ENCODE measurements at regions of chr6 and their contacts with region 1.

Region 1: DNA sequence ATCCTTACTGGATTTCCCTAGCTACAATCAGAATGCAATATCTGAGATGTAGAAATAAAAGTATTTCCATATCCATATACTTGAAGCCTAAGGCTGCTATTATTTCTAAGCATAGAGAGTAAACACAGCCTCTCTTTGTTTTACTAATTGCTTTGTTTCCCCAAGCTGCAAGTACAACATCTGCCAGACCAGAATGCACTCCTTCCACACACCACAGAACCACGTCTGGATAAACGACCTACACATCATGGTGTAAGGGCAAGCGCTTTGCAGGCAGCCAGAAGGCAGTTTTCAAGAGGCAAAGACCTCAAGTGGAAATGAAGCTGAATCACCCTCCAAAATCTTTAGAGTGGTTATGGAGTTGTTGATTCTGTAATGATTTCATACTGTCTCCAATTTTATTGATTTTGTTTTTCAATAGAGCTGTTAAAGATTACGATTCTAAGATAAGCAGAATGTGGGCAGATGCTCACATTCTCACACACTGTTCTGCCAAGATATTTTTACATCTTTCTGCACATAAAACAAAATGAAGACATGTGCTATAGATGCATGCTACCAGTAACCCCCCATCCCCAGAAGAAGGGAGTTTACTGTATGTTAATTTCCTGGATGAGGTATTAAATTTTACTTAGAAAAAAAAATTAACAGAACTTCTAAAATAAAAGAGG is 88.8 kb downstream of the THEMIS start:
- DNase-seq: peak; percentile 38
- ATAC-seq: no peak
- H3K4me3 Mint-ChIP-seq: peak overlapping the region; percentile 36
- H3K27ac Mint-ChIP-seq: peak overlapping the region; percentile 71
- H3K4me1 Mint-ChIP-seq: peaks cover 88% of the 10 kb centered on the region
- H3K27me3 Mint-ChIP-seq: no peaks in the 10 kb centered on the region

Region 2: GRCh38 chr6:127085181-127085580 is 726.9 kb before region 1 on chr6:
- CTCF ChIA-PET with region 1: no interaction called
- POLR2A ChIA-PET with region 1: no interaction called
- intact Hi-C with region 1: no loop called
- DNase-seq: no peak
- ATAC-seq: no peak
- H3K4me3 Mint-ChIP-seq: no peak overlapping the region
- H3K27ac Mint-ChIP-seq: no peak overlapping the region
- H3K4me1 Mint-ChIP-seq: no peaks in the 10 kb centered on the region
- H3K27me3 Mint-ChIP-seq: peaks cover 3% of the 10 kb centered on the region

Region 3: GRCh38 chr6:127725821-127726220 is 86.2 kb before region 1 on chr6:
- CTCF ChIA-PET with region 1: no interaction called
- POLR2A ChIA-PET with region 1: no interaction called
- intact Hi-C with region 1: no loop called
- DNase-seq: no peak
- ATAC-seq: no peak
- H3K4me3 Mint-ChIP-seq: no peak overlapping the region
- H3K27ac Mint-ChIP-seq: no peak overlapping the region
- H3K4me1 Mint-ChIP-seq: peaks cover 33% of the 10 kb centered on the region
- H3K27me3 Mint-ChIP-seq: no peaks in the 10 kb centered on the region

Region 4: DNA sequence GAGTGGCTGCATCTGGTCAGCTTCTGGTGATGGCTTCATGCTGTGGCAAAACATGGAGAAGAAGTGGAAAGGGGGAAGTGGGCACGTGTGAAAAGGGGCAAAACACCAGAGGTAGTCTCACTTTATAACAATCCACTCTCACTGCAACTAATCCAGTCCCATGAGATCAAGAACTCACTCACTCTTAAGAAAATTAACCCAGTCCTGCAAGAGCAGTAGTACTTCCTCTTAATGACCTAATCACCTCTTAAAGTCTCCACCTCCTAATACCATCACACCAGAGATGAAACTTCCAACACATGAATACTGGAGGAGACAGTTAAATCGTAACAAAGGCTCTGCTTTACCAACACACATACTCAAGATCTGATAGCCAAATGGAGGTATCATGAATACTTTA is 63.7 kb before region 1 on chr6:
- CTCF ChIA-PET with region 1: interaction called, 3 read pairs
- POLR2A ChIA-PET with region 1: no interaction called
- intact Hi-C with region 1: loop called (anchors 2 kb)
- DNase-seq: no peak
- ATAC-seq: peak; percentile 76
- H3K4me3 Mint-ChIP-seq: peak overlapping the region; percentile 23
- H3K27ac Mint-ChIP-seq: peak overlapping the region; percentile 83
- H3K4me1 Mint-ChIP-seq: peaks cover 61% of the 10 kb centered on the region
- H3K27me3 Mint-ChIP-seq: no peaks in the 10 kb centered on the region

Region 5: GRCh38 chr6:127786109-127786508 is 25.9 kb before region 1 on chr6:
- CTCF ChIA-PET with region 1: interaction called, 3 read pairs
- POLR2A ChIA-PET with region 1: no interaction called
- intact Hi-C with region 1: loop called in 1 of 2 experiments (anchors 1 kb)
- DNase-seq: no peak
- ATAC-seq: no peak
- H3K4me3 Mint-ChIP-seq: no peak overlapping the region
- H3K27ac Mint-ChIP-seq: no peak overlapping the region
- H3K4me1 Mint-ChIP-seq: peaks cover 75% of the 10 kb centered on the region
- H3K27me3 Mint-ChIP-seq: no peaks in the 10 kb centered on the region

Region 6: DNA sequence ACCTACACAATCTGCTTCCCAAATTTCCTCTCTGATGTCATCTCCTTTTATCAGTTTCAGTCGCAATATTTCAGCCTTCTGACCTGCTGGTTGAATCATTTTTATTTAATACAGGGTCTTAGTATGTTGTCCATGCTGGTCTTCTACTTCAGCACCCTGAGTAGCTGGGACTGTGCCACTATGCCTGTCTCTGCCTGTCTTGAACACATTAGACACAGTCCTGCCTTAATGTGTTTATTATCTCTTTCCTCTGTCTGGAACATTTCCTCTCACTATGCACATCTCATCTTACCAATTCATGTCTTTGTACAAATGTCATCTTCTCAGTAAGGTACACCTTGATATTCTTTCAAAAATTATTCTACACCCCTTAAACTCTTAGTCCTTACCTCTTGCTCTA is 17.6 kb before region 1 on chr6:
- CTCF ChIA-PET with region 1: interaction called, 15 read pairs
- POLR2A ChIA-PET with region 1: interaction called, 4 read pairs
- intact Hi-C with region 1: no loop called
- DNase-seq: no peak
- ATAC-seq: peak; percentile 42
- H3K4me3 Mint-ChIP-seq: no peak overlapping the region
- H3K27ac Mint-ChIP-seq: peak overlapping the region; percentile 22
- H3K4me1 Mint-ChIP-seq: peaks cover 77% of the 10 kb centered on the region
- H3K27me3 Mint-ChIP-seq: no peaks in the 10 kb centered on the region

Region 7: DNA sequence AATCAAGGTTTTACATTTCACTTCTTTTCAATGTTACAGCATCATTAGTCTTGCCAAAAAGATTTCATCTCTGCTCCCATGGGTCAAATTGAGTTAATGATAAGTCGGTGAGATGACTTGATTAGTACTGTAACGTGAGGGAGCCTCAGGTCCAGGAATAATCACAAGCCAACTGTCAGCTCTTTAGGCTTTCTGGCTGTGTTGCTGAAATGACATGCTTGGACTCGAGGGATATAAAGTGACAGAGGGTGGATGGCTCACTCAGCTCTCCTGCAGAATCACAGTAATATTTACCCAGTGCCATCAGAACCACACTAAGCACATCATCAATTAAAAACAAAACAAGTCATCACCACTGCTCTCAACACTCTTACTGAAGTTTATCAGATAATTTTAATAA is 285.0 kb after region 1 on chr6:
- CTCF ChIA-PET with region 1: no interaction called
- POLR2A ChIA-PET with region 1: no interaction called
- intact Hi-C with region 1: no loop called
- DNase-seq: no peak
- ATAC-seq: no peak
- H3K4me3 Mint-ChIP-seq: no peak overlapping the region
- H3K27ac Mint-ChIP-seq: no peak overlapping the region
- H3K4me1 Mint-ChIP-seq: peaks cover 16% of the 10 kb centered on the region
- H3K27me3 Mint-ChIP-seq: no peaks in the 10 kb centered on the region

Measured in activated CD4-positive, alpha-beta T cell treated with anti-CD3 and anti-CD28 coated beads for 36 hours (primary cell).